ENCODE measurements at regions of chr2 and their contacts with region 1.

Region 1: DNA sequence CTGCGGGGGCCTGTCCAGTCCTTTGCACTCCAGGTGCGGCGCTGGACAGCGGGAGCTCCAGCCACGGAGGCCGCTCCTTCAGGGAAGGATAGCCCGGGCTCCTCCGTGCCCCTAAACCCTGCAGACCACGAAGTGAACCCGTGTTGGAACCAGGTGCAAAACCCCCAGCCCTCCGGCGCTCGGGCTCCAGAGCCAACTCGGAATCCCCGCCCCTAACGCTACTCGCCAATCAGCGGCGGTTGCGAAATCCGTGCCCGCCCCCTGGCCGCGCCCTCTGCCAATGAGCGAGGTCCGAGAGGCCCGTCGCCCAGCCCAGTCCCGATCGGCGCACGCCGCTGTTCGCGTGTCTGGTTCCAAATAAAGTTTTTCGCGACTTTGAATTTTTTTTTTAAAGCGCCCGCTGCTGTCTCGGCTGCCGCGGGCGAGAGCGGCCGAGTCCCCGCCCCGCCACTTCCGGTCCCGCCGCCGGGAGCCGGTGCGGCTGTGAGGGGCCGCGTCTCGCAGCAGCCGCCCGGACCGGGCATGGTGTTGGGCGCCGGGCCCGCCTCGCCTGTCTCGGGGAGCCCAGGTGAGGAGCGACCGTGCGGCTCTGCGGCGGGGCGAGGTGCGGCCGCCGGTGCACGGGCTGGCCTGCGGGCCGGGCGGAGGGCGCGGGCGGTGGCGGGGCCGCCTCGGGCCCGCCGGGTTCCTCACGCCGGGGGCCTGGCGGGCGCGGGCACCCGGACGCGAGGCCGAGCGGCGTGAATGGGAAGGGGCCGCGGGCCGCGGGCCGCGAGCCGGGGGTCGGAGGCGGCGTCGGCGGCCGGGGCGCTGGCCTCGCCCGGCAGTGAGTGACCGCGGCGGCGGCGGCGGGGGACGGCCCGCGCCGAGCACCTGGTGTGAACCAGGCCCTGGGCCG is at the start of gene UBE2F:
- DNase-seq: peak; percentile 76
- ATAC-seq: peak; percentile 97
- H3K4me3 ChIP-seq: peak within 1 kb of the TSS; percentile 76
- H3K27ac ChIP-seq: 0 out of 2 replicates have a peak within 1 kb of the TSS, but pooled peaks have one; percentile 8
- H3K4me1 ChIP-seq: peaks cover 19% of the 10 kb centered on the region
- H3K27me3 ChIP-seq: no peaks in the 10 kb centered on the region; a peak in 1 of 4 replicates
- CTCF ChIP-seq: no peak
- EP300 ChIP-seq: no peak
- POLR2A ChIP-seq: peak; percentile 78
- RAD21 ChIP-seq: no peak
- polyA plus RNA-seq, gene UBE2F: 12.3 to 21.9 TPM

Region 2: GRCh38 chr2:238015705-238016104 is 48.9 kb after region 1 on chr2:
- CTCF ChIA-PET with region 1: interaction called, 9 read pairs
- POLR2A ChIA-PET with region 1: no interaction called
- RAD21 ChIA-PET with region 1: interaction called, 7 read pairs
- SMC1A ChIA-PET with region 1: interaction called, 11 read pairs
- in situ Hi-C with region 1: no loop called
- intact Hi-C with region 1: no loop called
- DNase-seq: no peak
- ATAC-seq: 0 out of 3 replicates have a peak, but pooled peaks have one; percentile 25
- H3K4me3 ChIP-seq: no peak overlapping the region
- H3K27ac ChIP-seq: no peak overlapping the region
- H3K4me1 ChIP-seq: no peaks in the 10 kb centered on the region
- H3K27me3 ChIP-seq: no peaks in the 10 kb centered on the region
- CTCF ChIP-seq: peak in 2 of 3 experiments; percentile 11 to 28; a peak in 2 of 6 replicates
- EP300 ChIP-seq: no peak
- POLR2A ChIP-seq: no peak
- RAD21 ChIP-seq: peak; percentile 19; the same call in 1 of the 2 replicates

Region 3: DNA sequence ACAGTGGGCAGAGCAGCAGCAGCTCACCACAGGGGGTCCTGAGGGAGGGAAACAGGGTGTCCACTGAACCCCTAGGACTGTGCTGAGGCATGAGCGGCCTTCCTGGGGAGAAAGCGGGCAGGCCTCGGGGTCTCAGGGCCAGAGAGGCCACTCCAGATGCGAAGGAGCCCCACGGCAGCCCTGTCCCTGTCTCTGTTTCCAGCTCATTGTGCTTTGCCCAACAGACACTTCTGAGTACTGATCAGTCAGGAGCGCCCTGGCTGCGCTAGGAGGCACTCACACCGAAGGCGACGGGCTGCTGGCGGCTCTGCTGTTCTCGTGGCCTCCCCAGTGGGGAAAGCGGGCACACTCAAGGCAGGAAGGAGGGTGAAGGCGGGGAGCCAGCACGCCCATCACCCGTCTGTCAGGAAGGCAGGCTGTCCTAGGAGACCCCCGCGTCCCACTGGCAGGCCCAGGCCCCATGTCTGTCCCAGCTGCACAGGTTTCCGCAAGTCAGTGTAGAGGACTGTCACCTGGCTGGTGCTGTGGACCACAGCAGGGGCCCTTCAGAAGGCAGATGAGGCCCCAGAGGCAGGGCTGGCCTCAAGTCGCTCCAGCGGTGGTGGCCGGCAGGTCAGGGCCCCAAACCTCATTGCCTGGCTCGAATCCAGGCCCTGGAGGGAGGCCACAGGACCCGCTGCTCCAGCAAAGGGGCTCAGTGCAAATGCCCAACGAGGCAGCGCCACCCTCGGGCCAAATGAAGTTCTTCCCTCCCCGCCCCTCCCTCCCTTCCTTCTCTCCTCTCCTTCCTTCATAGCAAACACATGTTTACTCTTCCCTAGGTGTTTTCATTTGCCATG is 140.1 kb after region 1 on chr2:
- CTCF ChIA-PET with region 1: interaction called, 41 read pairs
- POLR2A ChIA-PET with region 1: interaction called, 5 read pairs
- RAD21 ChIA-PET with region 1: interaction called, 23 read pairs
- SMC1A ChIA-PET with region 1: interaction called, 12 read pairs
- in situ Hi-C with region 1: no loop called
- intact Hi-C with region 1: no loop called
- DNase-seq: no peak
- ATAC-seq: peak; percentile 36
- H3K4me3 ChIP-seq: peak overlapping the region; percentile 26; the same call in 1 of the 2 replicates
- H3K27ac ChIP-seq: peak overlapping the region; percentile 62
- H3K4me1 ChIP-seq: peaks cover 21% of the 10 kb centered on the region
- H3K27me3 ChIP-seq: no peaks in the 10 kb centered on the region
- CTCF ChIP-seq: peak; percentile 40 to 62 (median 49)
- EP300 ChIP-seq: no peak
- POLR2A ChIP-seq: no peak
- RAD21 ChIP-seq: peak; percentile 37; the same call in 1 of the 2 replicates

Region 4: GRCh38 chr2:238120463-238121298 is 153.9 kb after region 1 on chr2:
- CTCF ChIA-PET with region 1: no interaction called
- POLR2A ChIA-PET with region 1: no interaction called
- RAD21 ChIA-PET with region 1: no interaction called
- SMC1A ChIA-PET with region 1: no interaction called
- in situ Hi-C with region 1: no loop called
- intact Hi-C with region 1: no loop called
- DNase-seq: no peak
- ATAC-seq: peak; percentile 20; the same call in 1 of the 3 replicates
- H3K4me3 ChIP-seq: no peak overlapping the region
- H3K27ac ChIP-seq: no peak overlapping the region
- H3K4me1 ChIP-seq: no peaks in the 10 kb centered on the region
- H3K27me3 ChIP-seq: no peaks in the 10 kb centered on the region
- CTCF ChIP-seq: no peak
- EP300 ChIP-seq: no peak
- POLR2A ChIP-seq: no peak
- RAD21 ChIP-seq: no peak

Region 5: GRCh38 chr2:238256594-238257104 is 289.8 kb after region 1 on chr2:
- CTCF ChIA-PET with region 1: interaction called, 4 read pairs
- POLR2A ChIA-PET with region 1: no interaction called
- RAD21 ChIA-PET with region 1: no interaction called
- SMC1A ChIA-PET with region 1: interaction called, 4 read pairs
- in situ Hi-C with region 1: no loop called
- intact Hi-C with region 1: loop called (anchors 1 kb)
- DNase-seq: no peak
- ATAC-seq: peak; percentile 97
- H3K4me3 ChIP-seq: no peak overlapping the region
- H3K27ac ChIP-seq: no peak overlapping the region
- H3K4me1 ChIP-seq: no peaks in the 10 kb centered on the region
- H3K27me3 ChIP-seq: no peaks in the 10 kb centered on the region
- CTCF ChIP-seq: peak; percentile 58 to 75 (median 72)
- EP300 ChIP-seq: no peak
- POLR2A ChIP-seq: no peak
- RAD21 ChIP-seq: peak; percentile 65